ENCODE measurements at regions of chr13 and their contacts with region 1.

Region 1: DNA sequence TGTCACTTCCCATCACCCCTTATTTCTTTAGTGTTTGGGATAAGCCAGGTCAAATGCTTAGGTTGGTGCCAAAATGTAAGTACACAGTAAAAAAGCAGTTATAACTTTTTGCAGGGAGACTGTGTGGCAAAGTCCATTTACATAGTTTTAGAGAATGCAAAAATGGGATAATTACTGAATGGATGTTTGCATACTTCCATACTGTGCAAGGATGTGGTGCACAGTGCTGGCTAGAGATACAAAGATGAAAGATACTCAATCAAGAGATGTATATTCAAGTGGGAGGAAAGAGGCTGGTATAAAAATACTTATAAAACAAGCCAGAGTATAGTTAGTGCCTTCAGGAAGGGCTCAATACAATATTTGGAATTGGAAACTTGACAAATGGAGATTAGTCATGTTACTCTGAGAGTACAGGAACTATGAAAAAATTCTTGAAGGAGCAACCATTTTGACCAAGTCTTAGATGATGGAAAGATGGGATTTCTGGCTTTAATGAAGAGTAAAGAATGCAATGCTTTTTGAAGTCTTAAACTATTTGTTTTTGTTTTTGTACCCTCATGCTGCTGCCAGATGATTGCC is 8.0 kb downstream of the PDS5B start:
- DNase-seq: no peak
- H3K4me3 ChIP-seq: no peak overlapping the region
- H3K27ac ChIP-seq: no peak overlapping the region
- H3K4me1 ChIP-seq: peaks cover 12% of the 10 kb centered on the region
- H3K27me3 ChIP-seq: no peaks in the 10 kb centered on the region
- CTCF ChIP-seq: no peak
- EP300 ChIP-seq: no peak
- POLR2A ChIP-seq: no peak

Region 2: DNA sequence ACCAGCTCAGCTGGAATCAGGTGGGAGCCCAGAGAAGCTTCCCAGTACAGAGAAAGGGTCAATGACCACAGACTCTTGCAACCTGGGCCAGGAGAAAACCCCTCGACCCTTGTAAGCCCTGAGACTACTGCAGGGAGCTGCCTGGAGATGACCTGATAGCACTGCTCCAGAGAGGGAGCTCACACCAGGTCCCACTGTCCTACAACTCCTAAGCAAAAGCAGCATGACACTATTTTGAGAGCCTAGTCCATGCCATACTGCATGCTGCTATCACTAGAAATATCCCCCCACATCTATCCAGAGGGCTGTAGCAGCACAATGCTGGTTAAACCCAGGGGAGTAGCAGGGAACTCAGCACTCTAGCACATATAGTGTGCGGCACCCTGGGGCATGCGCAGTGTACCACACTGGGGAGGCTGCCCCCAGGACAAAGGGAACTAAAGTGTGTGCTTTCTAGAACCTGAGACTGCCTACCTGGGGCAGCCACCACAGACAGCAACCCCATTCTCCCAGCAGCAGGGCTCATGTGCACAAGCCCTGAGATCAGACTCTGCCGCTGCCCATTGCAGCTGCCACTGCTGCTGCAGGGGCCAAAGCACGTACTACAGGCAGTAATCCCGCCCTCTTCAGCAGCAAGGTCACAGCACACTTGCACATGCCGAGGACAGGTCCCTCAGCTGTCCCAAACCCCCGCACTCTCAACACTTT is 139.2 kb before region 1 on chr13:
- intact Hi-C with region 1: no loop called
- DNase-seq: no peak
- H3K4me3 ChIP-seq: no peak overlapping the region
- H3K27ac ChIP-seq: no peak overlapping the region
- H3K4me1 ChIP-seq: no peaks in the 10 kb centered on the region
- H3K27me3 ChIP-seq: no peaks in the 10 kb centered on the region
- CTCF ChIP-seq: no peak
- EP300 ChIP-seq: no peak
- POLR2A ChIP-seq: no peak

Region 3: GRCh38 chr13:32632343-32632909 is 38.2 kb after region 1 on chr13:
- intact Hi-C with region 1: loop called in 1 of 4 experiments (anchors 5 kb)
- DNase-seq: no peak
- H3K4me3 ChIP-seq: no peak overlapping the region
- H3K27ac ChIP-seq: no peak overlapping the region
- H3K4me1 ChIP-seq: peaks cover 3% of the 10 kb centered on the region
- H3K27me3 ChIP-seq: no peaks in the 10 kb centered on the region
- CTCF ChIP-seq: no peak
- EP300 ChIP-seq: no peak
- POLR2A ChIP-seq: no peak

Region 4: DNA sequence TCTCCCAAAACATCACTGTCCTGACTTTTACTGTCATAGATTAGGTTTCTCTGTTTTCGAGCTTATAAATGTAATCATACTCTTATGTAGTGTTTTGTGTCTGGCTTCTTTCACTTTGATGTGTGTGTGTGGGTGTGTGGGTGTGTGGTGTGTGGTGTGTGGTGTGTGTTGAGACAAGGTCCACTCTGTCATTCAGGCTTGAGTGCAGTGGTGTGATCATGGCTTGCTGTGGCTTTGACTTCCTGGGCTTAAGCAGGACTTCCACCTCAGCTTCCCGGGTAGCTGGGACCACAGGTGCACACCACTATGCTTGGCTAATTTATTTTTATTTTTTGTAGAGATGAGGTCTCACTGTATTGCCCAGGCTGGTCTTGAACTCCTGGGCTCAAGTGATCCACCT is 51.6 kb after region 1 on chr13:
- intact Hi-C with region 1: loop called in 2 of 4 experiments (anchors 5 kb)
- DNase-seq: no peak
- H3K4me3 ChIP-seq: no peak overlapping the region
- H3K27ac ChIP-seq: no peak overlapping the region
- H3K4me1 ChIP-seq: peaks cover 7% of the 10 kb centered on the region
- H3K27me3 ChIP-seq: no peaks in the 10 kb centered on the region
- CTCF ChIP-seq: no peak
- EP300 ChIP-seq: no peak
- POLR2A ChIP-seq: no peak

Measured in ovary (tissue), 10 donors.